Psoas muscle (tissue), 8 donors: ENCODE measurements at regions of chr9 and their contacts with region 1.

Region 1: DNA sequence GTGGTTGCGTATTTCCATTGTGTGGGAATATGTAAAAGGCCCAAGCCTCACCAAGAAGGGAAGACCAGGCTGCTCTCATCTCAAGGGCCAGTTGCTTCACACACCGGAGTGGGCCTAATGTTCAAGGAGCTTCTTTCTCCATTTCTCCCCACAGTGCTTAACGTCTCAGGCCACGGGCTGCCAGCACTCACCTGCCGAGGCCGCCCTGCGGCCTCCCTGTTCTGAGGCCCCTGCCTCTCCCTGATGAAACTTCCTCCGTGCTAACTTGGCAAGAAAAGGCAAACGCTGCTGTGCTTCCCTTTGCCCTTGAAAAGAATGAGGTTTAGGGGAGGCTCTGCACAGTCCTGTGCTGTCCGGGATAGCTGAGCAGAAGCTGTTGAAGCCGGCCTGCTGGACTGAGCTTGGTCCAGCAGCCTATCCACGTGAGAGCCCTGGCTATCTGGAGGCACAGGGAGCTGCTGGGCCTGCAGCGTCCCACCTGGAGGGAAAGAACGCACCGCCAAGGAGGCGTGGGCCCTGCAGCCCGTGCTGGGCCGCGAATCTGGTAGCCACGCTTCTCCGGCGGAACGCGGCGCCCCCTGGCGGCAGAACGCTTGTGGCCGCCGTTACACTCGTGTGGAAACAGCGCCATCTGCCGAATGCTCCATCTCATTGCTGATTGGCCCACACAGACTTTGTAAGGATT is 73.5 kb upstream of the PRSS3 start:
- DNase-seq: peak; percentile 83 to 92
- ATAC-seq: peak; percentile 91 to 97 (median 96)
- H3K4me3 ChIP-seq: no peak overlapping the region
- H3K27ac ChIP-seq: no peak overlapping the region
- H3K4me1 ChIP-seq: peaks cover 4% of the 10 kb centered on the region
- H3K27me3 ChIP-seq: no peaks in the 10 kb centered on the region
- CTCF ChIP-seq: peak; percentile 100

Region 2: DNA sequence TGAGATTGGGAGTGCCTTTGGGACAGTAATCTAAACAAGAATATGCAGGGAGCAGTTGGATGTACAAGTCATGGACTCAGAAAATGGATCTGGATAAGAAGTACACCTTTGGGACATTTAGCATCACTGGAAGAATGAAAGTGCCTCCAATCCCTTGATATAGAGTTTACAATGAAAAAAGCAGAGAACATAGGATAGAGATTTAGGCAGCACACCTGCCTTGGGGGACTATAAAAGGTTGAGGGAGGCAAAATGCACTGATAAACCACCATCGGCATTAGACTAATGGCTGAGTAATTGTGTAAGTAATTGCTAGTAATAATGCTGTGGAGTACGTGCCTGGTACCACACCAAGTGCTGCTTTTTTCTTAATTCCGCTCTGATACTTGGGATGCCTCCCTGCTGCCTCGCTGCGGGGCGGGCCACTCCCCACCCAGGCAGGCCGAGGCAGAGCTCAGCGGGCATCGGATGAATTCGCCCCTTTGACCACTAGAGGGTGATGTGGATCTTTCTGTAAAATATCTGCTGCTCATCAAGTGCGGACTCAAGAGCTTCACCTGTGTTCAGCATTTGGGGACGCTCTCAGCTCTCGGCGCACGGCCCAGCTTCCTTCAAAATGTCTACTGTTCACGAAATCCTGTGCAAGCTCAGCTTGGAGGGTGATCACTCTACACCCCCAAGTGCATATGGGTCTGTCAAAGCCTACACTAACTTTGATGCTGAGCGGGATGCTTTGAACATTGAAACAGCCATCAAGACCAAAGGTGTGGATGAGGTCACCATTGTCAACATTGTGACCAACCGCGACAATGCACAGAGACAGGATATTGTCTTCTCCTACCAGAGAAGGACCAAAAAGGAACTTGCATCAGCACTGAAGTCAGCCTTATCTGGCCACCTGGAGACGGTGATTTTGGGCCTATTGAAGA is 97.9 kb before region 1 on chr9:
- intact Hi-C with region 1: loop called (anchors 1 kb)
- DNase-seq: peak; percentile 43 to 64
- ATAC-seq: peak; percentile 82 to 94 (median 89)
- H3K4me3 ChIP-seq: no peak overlapping the region
- H3K27ac ChIP-seq: no peak overlapping the region
- H3K4me1 ChIP-seq: peaks cover 16% of the 10 kb centered on the region
- H3K27me3 ChIP-seq: peaks cover 0 to 2% (median 0%) of the 10 kb centered on the region in 3 donors
- CTCF ChIP-seq: peak; percentile 91

Region 3: GRCh38 chr9:33946779-33947535 is 225.1 kb after region 1 on chr9:
- intact Hi-C with region 1: no loop called
- DNase-seq: no peak
- ATAC-seq: peak in 1 of 4 donors; percentile 27
- H3K4me3 ChIP-seq: no peak overlapping the region
- H3K27ac ChIP-seq: no peak overlapping the region
- H3K4me1 ChIP-seq: peaks cover 15% of the 10 kb centered on the region
- H3K27me3 ChIP-seq: no peaks in the 10 kb centered on the region
- CTCF ChIP-seq: no peak